ENCODE measurements at regions of chr9 and their contacts with region 1.

Region 1: GRCh38 chr9:1018121-1018701 is 31.9 kb upstream of the DMRT2 start:
- DNase-seq: peak in 1 of 2 donors; percentile 34
- ATAC-seq: peak in 1 of 4 donors; percentile 65
- H3K4me3 ChIP-seq: no peak overlapping the region
- H3K27ac ChIP-seq: no peak overlapping the region
- H3K4me1 ChIP-seq: no peaks in the 10 kb centered on the region
- H3K27me3 ChIP-seq: peaks cover 0 to 3% (median 0%) of the 10 kb centered on the region in 3 donors
- CTCF ChIP-seq: peak; percentile 13

Region 2: GRCh38 chr9:371349-371748 is 646.9 kb before region 1 on chr9:
- intact Hi-C with region 1: loop called in 1 of 2 experiments (anchors 10 kb)
- DNase-seq: no peak
- ATAC-seq: peak; percentile 82 to 98 (median 94)
- H3K4me3 ChIP-seq: peak overlapping the region; percentile 13
- H3K27ac ChIP-seq: peak overlapping the region; percentile 62
- H3K4me1 ChIP-seq: peaks cover 37% of the 10 kb centered on the region
- H3K27me3 ChIP-seq: no peaks in the 10 kb centered on the region
- CTCF ChIP-seq: no peak

Region 3: DNA sequence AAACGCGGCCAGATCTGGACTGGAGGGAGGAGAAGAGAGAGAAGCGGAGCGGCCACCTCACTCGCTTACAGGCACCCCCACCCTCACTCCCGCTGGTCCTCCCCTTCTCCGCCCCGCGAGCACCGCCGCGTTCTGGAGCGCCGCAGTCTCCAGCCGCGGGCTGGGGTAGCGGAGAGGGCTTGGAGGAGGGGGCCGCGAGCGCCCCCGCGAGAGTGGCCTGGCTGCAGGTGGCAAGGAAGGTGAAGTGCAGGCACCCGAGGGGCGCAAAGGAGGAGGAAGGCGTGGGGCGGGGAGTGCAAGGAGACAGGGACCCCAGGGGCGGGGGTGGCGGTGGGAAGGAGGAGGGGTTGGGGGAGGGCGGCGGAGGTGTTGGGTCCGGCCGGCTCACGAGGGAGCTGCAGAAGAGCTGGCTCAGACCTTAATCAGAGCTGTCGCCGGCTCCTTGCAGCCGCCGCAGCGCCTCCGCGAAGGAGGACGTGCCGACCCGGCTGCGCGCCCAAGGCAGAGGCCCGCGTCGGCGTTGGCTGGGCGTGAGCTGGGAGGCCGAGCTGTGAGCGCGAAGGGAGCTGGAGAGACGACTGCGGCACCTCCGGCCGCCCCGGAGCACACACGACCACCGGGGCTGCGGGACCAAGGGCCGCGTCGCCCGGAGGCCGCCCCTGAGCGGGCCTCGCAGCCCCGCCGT is 41.8 kb before region 1 on chr9 and contains the start of gene DMRT3:
- intact Hi-C with region 1: no loop called
- DNase-seq: no peak
- ATAC-seq: peak in 1 of 4 donors; percentile 42
- H3K4me3 ChIP-seq: peak within 1 kb of the TSS; percentile 53
- H3K27ac ChIP-seq: no peak within 1 kb of the TSS
- H3K4me1 ChIP-seq: peaks cover 11% of the 10 kb centered on the region
- H3K27me3 ChIP-seq: peaks cover 0 to 96% (median 49%) of the 10 kb centered on the region in 3 donors
- CTCF ChIP-seq: no peak
- total RNA-seq, gene DMRT3: 0.17 to 0.44 (median 0.27) TPM in 3 of 4 donors, not detected in the other

Region 4: GRCh38 chr9:1001838-1002237 is 16.4 kb before region 1 on chr9:
- intact Hi-C with region 1: loop called in 1 of 2 experiments (anchors 1 kb)
- DNase-seq: no peak
- ATAC-seq: no peak
- H3K4me3 ChIP-seq: no peak overlapping the region
- H3K27ac ChIP-seq: no peak overlapping the region
- H3K4me1 ChIP-seq: no peaks in the 10 kb centered on the region
- H3K27me3 ChIP-seq: no peaks in the 10 kb centered on the region
- CTCF ChIP-seq: no peak

Region 5: GRCh38 chr9:1031951-1032601 is 13.9 kb after region 1 on chr9:
- intact Hi-C with region 1: no loop called
- DNase-seq: no peak
- ATAC-seq: no peak
- H3K4me3 ChIP-seq: no peak overlapping the region
- H3K27ac ChIP-seq: no peak overlapping the region
- H3K4me1 ChIP-seq: no peaks in the 10 kb centered on the region
- H3K27me3 ChIP-seq: peaks cover 0 to 14% (median 3%) of the 10 kb centered on the region in 3 donors
- CTCF ChIP-seq: no peak

Measured in psoas muscle (tissue), 8 donors.